ENCODE measurements at regions of chr6 and their contacts with region 1.

Region 1: GRCh38 chr6:137341681-137342195 is 122.6 kb upstream of the IFNGR1 start:
- DNase-seq: peak; percentile 19 to 81 (median 51)
- ATAC-seq: peak; percentile 62
- H3K4me3 ChIP-seq: no peak overlapping the region
- H3K4me3 Mint-ChIP-seq: peak overlapping the region; percentile 38
- H3K27ac ChIP-seq: no peak overlapping the region
- H3K27ac Mint-ChIP-seq: no peak overlapping the region
- H3K4me1 ChIP-seq: peaks cover 6% of the 10 kb centered on the region
- H3K4me1 Mint-ChIP-seq: peaks cover 19% of the 10 kb centered on the region
- H3K27me3 ChIP-seq: no peaks in the 10 kb centered on the region
- H3K27me3 Mint-ChIP-seq: no peaks in the 10 kb centered on the region
- CTCF ChIP-seq: peak; percentile 44

Region 2: GRCh38 chr6:137351890-137352289 is 10.2 kb after region 1 on chr6:
- CTCF ChIA-PET with region 1: interaction called, 12 read pairs
- POLR2A ChIA-PET with region 1: interaction called, 3 read pairs
- intact Hi-C with region 1: no loop called
- DNase-seq: peak in 1 of 9 experiments; percentile 34
- ATAC-seq: no peak
- H3K4me3 ChIP-seq: no peak overlapping the region
- H3K4me3 Mint-ChIP-seq: no peak overlapping the region
- H3K27ac ChIP-seq: no peak overlapping the region
- H3K27ac Mint-ChIP-seq: no peak overlapping the region
- H3K4me1 ChIP-seq: peaks cover 15% of the 10 kb centered on the region
- H3K4me1 Mint-ChIP-seq: peaks cover 21% of the 10 kb centered on the region
- H3K27me3 ChIP-seq: no peaks in the 10 kb centered on the region
- H3K27me3 Mint-ChIP-seq: peaks cover 2% of the 10 kb centered on the region
- CTCF ChIP-seq: no peak

Region 3: GRCh38 chr6:137405806-137406205 is 64.1 kb after region 1 on chr6:
- CTCF ChIA-PET with region 1: interaction called, 17 read pairs
- POLR2A ChIA-PET with region 1: no interaction called
- intact Hi-C with region 1: no loop called
- DNase-seq: no peak
- ATAC-seq: no peak
- H3K4me3 ChIP-seq: no peak overlapping the region
- H3K4me3 Mint-ChIP-seq: no peak overlapping the region
- H3K27ac ChIP-seq: no peak overlapping the region
- H3K27ac Mint-ChIP-seq: no peak overlapping the region
- H3K4me1 ChIP-seq: no peaks in the 10 kb centered on the region
- H3K4me1 Mint-ChIP-seq: peaks cover 19% of the 10 kb centered on the region
- H3K27me3 ChIP-seq: no peaks in the 10 kb centered on the region
- H3K27me3 Mint-ChIP-seq: no peaks in the 10 kb centered on the region
- CTCF ChIP-seq: no peak

Region 4: DNA sequence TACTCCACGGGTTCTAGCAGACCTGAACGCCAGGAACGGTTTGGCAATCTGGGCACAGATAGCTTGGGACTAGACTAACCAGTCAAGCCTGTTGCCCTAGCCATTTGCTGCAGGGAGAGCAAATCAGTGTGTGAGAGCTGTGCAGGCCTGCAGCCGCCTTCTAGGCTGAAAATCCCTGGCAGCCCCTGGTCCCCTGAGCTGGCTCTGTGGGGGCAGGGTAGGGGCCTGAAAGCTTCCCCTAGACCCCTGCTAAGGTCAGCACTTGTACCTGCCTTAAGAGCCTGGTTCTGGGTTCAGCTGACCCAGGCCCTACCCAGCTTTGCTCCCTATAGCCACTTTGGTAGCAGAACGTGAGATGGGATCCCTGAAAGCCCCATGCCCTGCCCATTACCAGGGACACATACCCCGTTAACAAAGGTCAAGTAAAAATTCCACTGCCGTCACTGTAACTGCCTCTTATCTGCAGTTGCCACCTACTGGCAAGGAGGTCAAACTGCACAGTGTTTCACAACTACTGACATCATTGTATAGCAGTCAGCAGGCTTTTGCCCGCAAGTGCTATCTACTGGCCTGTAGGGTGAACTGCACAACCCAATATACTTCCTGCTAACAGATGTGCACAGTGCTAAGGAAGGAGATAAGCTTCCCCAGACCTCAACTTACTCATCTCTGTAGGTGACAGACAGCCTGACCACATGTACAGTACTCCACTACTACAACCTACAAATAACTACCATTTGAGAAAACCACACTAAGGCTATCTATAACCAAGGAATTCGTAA is 247.5 kb after region 1 on chr6:
- CTCF ChIA-PET with region 1: interaction called, 17 read pairs
- POLR2A ChIA-PET with region 1: no interaction called
- intact Hi-C with region 1: loop called in 1 of 2 experiments (anchors 5 kb)
- DNase-seq: peak in 8 of 9 experiments; percentile 26 to 86 (median 58)
- ATAC-seq: peak; percentile 99
- H3K4me3 ChIP-seq: no peak overlapping the region
- H3K4me3 Mint-ChIP-seq: no peak overlapping the region
- H3K27ac ChIP-seq: no peak overlapping the region
- H3K27ac Mint-ChIP-seq: peak overlapping the region; percentile 0
- H3K4me1 ChIP-seq: peaks cover 9% of the 10 kb centered on the region
- H3K4me1 Mint-ChIP-seq: peaks cover 16% of the 10 kb centered on the region
- H3K27me3 ChIP-seq: no peaks in the 10 kb centered on the region
- H3K27me3 Mint-ChIP-seq: peaks cover 7% of the 10 kb centered on the region
- CTCF ChIP-seq: peak; percentile 61

Region 5: GRCh38 chr6:137975188-137975940 is 633.6 kb after region 1 on chr6:
- CTCF ChIA-PET with region 1: no interaction called
- POLR2A ChIA-PET with region 1: no interaction called
- intact Hi-C with region 1: loop called (anchors 5 to 10 kb)
- DNase-seq: peak in 5 of 9 experiments; percentile 19 to 89 (median 38)
- ATAC-seq: peak; percentile 80
- H3K4me3 ChIP-seq: peak overlapping the region; percentile 18 to 21
- H3K4me3 Mint-ChIP-seq: peak overlapping the region; percentile 74
- H3K27ac ChIP-seq: peak overlapping the region; percentile 39 to 85
- H3K27ac Mint-ChIP-seq: peak overlapping the region; percentile 92
- H3K4me1 ChIP-seq: peaks cover 24% of the 10 kb centered on the region
- H3K4me1 Mint-ChIP-seq: peaks cover 40% of the 10 kb centered on the region
- H3K27me3 ChIP-seq: no peaks in the 10 kb centered on the region
- H3K27me3 Mint-ChIP-seq: no peaks in the 10 kb centered on the region
- CTCF ChIP-seq: peak; percentile 75